BJ (cell line): ENCODE measurements at regions of chr16 and their contacts with region 1.

Region 1: DNA sequence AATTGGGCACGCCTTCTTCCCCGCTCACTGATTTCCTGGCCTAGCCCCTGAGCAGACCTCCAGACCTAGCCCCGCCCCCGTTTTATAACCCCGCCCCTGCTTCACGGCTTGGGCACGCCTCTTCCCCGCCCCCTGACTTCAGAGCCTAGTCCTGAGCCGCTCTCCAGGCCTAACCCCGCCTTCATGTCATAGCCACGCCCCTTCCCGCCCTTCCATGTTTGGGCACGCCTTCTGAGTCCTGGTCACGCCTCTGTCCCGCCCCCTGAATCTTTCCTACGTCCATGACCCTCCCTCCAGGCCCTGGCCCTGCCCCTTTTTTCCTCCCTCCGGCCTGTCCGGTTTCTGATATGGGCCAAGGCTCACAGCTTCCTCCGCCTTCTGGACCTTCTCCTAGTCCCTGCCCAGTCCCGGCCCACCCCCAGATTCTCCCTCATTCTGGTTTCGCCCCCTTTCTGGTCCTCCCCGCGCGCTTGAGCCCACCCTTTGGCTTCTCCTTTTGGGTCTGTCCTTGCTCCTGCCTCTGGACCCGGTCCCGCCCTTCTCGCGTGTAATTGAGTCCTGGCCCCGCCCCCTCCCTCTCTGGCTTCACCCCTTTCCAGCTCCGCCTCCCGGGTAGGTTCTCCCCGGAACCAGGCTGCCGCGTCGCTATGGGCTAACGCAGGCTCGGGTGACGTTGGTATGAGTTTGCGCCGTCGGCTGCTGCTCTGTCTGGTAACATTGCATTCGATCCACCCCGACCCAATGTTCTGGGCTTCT is 15.1 kb upstream of the EEF2K start:
- DNase-seq: peak; percentile 98
- H3K4me3 ChIP-seq: peak overlapping the region; percentile 47
- H3K27me3 ChIP-seq: no peaks in the 10 kb centered on the region
- CTCF ChIP-seq: no peak

Region 2: GRCh38 chr16:21989133-21989532 is 201.8 kb before region 1 on chr16:
- CTCF ChIA-PET with region 1: interaction called, 22 read pairs
- POLR2A ChIA-PET with region 1: no interaction called
- DNase-seq: peak; percentile 19
- H3K4me3 ChIP-seq: no peak overlapping the region
- H3K27me3 ChIP-seq: no peaks in the 10 kb centered on the region
- CTCF ChIP-seq: no peak

Region 3: DNA sequence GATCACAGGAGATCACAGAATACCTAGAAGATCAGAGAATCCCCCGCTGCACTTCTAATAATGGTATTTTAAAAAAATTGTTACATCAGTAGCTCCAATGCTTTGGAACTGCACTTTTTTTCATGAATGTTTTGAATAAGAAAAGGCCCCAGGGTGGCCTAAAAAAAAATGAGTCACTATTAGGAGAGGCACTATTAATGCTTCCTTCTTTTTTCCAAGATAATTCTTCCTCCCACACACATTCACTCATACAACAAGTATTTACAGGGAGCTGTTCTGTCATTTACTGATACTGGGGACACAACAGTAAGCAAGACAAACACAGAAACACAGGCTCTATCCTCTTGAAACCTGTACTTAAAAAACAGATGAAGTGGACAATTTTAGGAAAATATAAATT is 189.4 kb before region 1 on chr16:
- CTCF ChIA-PET with region 1: interaction called, 27 read pairs
- POLR2A ChIA-PET with region 1: no interaction called
- DNase-seq: peak; percentile 72
- H3K4me3 ChIP-seq: no peak overlapping the region
- H3K27me3 ChIP-seq: no peaks in the 10 kb centered on the region
- CTCF ChIP-seq: no peak

Region 4: GRCh38 chr16:22206013-22206841 is 15.3 kb after region 1 on chr16 and contains the start of gene EEF2K:
- CTCF ChIA-PET with region 1: interaction called, 4 read pairs
- POLR2A ChIA-PET with region 1: interaction called, 15 read pairs
- DNase-seq: peak; percentile 68
- H3K4me3 ChIP-seq: peak within 1 kb of the TSS; percentile 73
- H3K27me3 ChIP-seq: no peaks in the 10 kb centered on the region
- CTCF ChIP-seq: peak; percentile 72
- polyA plus RNA-seq, gene EEF2K: 8.7 and 10.9 TPM in 2 replicates

Region 5: GRCh38 chr16:22232277-22233042 is 41.5 kb after region 1 on chr16:
- CTCF ChIA-PET with region 1: no interaction called
- POLR2A ChIA-PET with region 1: no interaction called
- DNase-seq: no peak
- H3K4me3 ChIP-seq: no peak overlapping the region
- H3K27me3 ChIP-seq: no peaks in the 10 kb centered on the region
- CTCF ChIP-seq: no peak